ENCODE measurements at regions of chr14 and their contacts with region 1.

Region 1: DNA sequence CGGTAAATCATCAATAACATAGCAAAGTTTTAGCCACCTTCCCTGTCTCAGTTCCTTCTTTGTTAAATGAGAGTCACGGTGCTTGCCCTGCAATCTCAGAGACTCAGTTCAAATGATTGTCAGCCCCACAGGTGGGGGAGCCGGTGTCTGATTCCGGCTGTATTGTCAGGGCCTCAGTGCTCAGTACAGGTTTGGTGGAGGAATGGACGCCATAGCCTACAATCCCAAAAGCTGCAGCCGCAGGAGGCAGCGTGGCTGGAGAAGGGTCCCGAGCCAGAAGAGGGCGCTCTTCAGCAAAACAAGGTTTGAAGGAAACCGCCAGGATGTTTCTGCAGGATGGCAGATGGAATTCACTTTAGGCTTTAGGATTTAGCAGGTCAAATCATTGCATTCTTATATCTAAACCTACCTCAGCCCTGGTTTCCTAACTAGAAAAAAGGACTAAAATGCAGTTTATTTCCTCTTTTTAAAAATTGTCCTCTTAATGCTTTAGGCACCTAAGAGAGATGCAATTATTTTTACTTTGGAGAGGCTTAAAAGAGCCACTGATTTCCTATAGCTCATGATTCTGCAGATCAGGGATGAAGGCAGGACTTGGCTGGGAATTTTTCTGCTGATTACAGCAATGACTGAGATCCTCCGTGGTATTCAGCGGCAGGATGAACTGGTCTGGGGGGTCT is 29.2 kb downstream of the FOS start:
- DNase-seq: peak; percentile 82
- ATAC-seq: peak; percentile 62
- H3K4me3 Mint-ChIP-seq: no peak overlapping the region
- H3K27ac Mint-ChIP-seq: no peak overlapping the region
- H3K4me1 Mint-ChIP-seq: peaks cover 13% of the 10 kb centered on the region
- H3K27me3 Mint-ChIP-seq: peaks cover 1% of the 10 kb centered on the region
- CTCF ChIP-seq: peak; percentile 97

Region 2: GRCh38 chr14:75132382-75133086 is 175.3 kb before region 1 on chr14:
- CTCF ChIA-PET with region 1: interaction called, 268 read pairs
- POLR2A ChIA-PET with region 1: no interaction called
- intact Hi-C with region 1: no loop called
- DNase-seq: peak; percentile 57
- ATAC-seq: peak; percentile 85
- H3K4me3 Mint-ChIP-seq: no peak overlapping the region
- H3K27ac Mint-ChIP-seq: peak overlapping the region; percentile 32
- H3K4me1 Mint-ChIP-seq: peaks cover 19% of the 10 kb centered on the region
- H3K27me3 Mint-ChIP-seq: no peaks in the 10 kb centered on the region
- CTCF ChIP-seq: peak; percentile 72

Region 3: DNA sequence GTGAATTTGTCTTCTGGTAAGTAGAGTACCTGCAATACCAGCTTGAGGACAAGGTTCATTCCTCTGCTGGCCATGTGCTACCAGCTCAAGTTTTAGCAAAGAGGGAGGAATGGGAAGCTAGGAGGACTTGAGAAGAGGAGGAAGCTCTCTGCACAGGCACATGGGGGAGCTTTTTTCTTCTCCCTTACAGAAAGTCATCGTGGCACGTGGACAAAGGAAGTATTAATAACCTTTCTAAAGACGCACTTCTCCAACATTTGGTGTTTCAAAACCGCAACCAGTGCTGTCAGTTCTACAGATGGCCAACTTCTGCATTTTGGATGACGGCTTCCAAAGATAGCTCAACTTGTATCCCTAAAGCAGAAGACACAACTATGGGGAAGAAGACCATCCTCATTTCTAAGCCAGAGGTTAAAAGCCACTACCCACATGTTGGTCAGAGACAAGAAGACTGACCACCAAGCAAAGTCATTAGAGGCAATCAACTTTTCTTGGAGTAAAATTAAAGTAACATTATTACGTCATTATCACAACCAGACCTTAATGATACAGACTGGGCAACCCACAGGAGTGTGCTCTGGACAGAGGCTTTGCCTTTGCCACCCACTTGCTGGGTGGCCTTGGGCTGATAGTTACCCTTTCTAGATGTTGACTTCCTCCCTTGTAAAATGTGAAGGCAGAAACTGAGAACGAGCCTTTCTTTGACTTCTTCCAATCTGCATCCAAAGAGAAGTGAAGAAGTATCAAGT is 119.1 kb before region 1 on chr14:
- CTCF ChIA-PET with region 1: no interaction called
- POLR2A ChIA-PET with region 1: no interaction called
- intact Hi-C with region 1: no loop called
- DNase-seq: no peak
- ATAC-seq: no peak
- H3K4me3 Mint-ChIP-seq: no peak overlapping the region
- H3K27ac Mint-ChIP-seq: no peak overlapping the region
- H3K4me1 Mint-ChIP-seq: peaks cover 7% of the 10 kb centered on the region
- H3K27me3 Mint-ChIP-seq: peaks cover 5% of the 10 kb centered on the region
- CTCF ChIP-seq: no peak

Region 4: GRCh38 chr14:75223664-75224154 is 84.1 kb before region 1 on chr14:
- CTCF ChIA-PET with region 1: no interaction called
- POLR2A ChIA-PET with region 1: no interaction called
- intact Hi-C with region 1: no loop called
- DNase-seq: peak; percentile 57
- ATAC-seq: peak; percentile 50
- H3K4me3 Mint-ChIP-seq: no peak overlapping the region
- H3K27ac Mint-ChIP-seq: no peak overlapping the region
- H3K4me1 Mint-ChIP-seq: peaks cover 14% of the 10 kb centered on the region
- H3K27me3 Mint-ChIP-seq: no peaks in the 10 kb centered on the region
- CTCF ChIP-seq: no peak

Region 5: DNA sequence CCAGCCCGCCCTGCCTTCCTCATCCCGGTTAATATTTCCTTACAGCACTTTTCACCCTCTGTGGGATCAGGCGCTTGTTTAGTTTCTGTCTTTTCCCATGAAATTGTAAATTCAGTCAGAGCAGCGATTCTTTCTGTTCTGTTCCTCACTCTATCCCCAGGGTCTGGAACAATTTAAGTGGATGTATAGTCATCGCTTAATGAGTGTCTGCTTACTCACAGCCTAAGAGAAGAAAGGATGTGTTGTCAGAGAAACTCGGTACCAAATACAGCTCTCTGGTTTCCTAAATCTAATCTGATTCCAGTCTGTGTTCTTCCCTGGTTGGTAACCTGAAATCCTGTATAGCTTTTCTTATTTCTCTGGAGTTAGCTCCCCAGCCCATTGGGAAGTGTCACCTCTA is 15.7 kb after region 1 on chr14:
- CTCF ChIA-PET with region 1: interaction called, 14 read pairs
- POLR2A ChIA-PET with region 1: no interaction called
- intact Hi-C with region 1: no loop called
- DNase-seq: no peak
- ATAC-seq: no peak
- H3K4me3 Mint-ChIP-seq: no peak overlapping the region
- H3K27ac Mint-ChIP-seq: no peak overlapping the region
- H3K4me1 Mint-ChIP-seq: no peaks in the 10 kb centered on the region
- H3K27me3 Mint-ChIP-seq: peaks cover 3% of the 10 kb centered on the region
- CTCF ChIP-seq: no peak

Region 6: DNA sequence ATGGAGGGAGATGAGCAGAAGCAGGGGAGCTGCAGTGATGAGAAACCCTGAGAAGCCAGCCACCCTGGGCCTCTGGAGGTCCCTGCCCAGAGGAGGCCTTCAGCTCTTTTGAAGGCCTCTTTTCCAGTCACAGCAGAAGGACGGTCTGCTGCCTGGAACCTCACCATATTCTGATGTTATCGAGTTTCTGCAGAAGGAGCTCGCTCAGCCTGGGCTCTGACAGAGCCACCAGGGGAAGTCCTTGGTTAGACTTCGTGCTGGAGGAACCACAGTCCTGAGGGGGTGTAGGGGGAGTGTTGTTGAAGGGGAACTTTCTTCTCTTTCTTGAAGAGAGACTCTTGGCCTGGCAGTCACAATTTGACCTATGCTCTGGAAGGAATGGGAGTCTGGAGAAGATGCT is 189.4 kb after region 1 on chr14:
- CTCF ChIA-PET with region 1: interaction called, 10 read pairs
- POLR2A ChIA-PET with region 1: no interaction called
- intact Hi-C with region 1: no loop called
- DNase-seq: peak; percentile 75
- ATAC-seq: peak; percentile 83
- H3K4me3 Mint-ChIP-seq: peak overlapping the region; percentile 14
- H3K27ac Mint-ChIP-seq: peak overlapping the region; percentile 80
- H3K4me1 Mint-ChIP-seq: peaks cover 59% of the 10 kb centered on the region
- H3K27me3 Mint-ChIP-seq: no peaks in the 10 kb centered on the region
- CTCF ChIP-seq: no peak